B cell (primary cell): ENCODE measurements at regions of chr13 and their contacts with region 1.

Region 1: DNA sequence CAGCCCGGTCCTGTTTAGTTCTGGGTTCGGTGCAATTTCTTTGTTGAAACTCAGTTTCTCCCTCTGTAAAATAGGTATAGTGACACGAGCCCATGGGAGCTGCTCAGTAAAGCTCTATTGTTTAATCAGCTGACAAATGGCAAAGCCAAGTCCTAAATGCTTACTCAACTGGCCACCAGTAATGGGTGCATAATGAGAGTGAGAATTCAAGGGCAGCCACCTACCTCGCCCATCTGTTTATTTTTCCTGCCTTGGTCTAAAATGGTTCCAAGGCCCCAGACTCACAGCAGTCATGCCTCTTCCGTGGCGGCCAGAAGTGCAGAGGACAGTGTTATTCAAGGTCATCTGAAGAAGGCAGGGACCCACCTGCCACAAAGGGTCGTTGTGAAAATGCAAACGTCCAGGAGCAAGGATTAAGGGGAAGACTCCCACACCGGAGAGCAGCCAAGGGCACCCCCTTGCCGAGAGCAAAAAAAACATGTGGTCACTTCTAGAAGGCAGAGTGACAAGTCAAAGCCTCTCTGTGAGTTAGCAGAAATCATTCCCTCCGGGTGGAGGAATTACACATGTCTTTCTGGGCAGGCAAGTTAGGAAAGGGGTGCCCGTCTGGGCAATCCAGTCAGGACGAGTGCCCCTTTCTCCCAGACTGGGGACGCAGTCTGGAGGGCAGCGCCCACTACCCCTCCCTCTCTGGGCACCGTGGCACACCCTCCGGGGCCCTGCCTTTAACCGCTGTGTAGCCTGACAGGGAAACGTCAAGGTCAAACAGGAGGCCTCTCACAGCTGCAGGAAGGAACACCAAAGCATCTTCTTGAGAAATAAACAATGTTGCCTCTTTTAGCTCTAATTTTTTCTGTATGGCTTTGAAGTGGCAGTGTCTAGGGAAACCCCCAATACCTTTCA is 186.2 kb downstream of the FOXO1 start:
- DNase-seq: peak; percentile 29
- ATAC-seq: peak; percentile 40
- H3K4me3 ChIP-seq: no peak overlapping the region
- H3K4me3 Mint-ChIP-seq: peak overlapping the region; percentile 23
- H3K27ac ChIP-seq: no peak overlapping the region
- H3K27ac Mint-ChIP-seq: no peak overlapping the region
- H3K4me1 ChIP-seq: peaks cover 39 to 40% of the 10 kb centered on the region in 2 donors
- H3K4me1 Mint-ChIP-seq: peaks cover 46% of the 10 kb centered on the region
- H3K27me3 ChIP-seq: no peaks in the 10 kb centered on the region
- H3K27me3 Mint-ChIP-seq: no peaks in the 10 kb centered on the region
- CTCF ChIP-seq: no peak

Region 2: GRCh38 chr13:40494513-40494912 is 14.2 kb after region 1 on chr13:
- CTCF ChIA-PET with region 1: no interaction called
- POLR2A ChIA-PET with region 1: no interaction called
- intact Hi-C with region 1: loop called (anchors 2 kb)
- DNase-seq: peak; percentile 62
- ATAC-seq: peak; percentile 37
- H3K4me3 ChIP-seq: peak overlapping the region in 4 of 5 experiments; percentile 4 to 37 (median 25)
- H3K4me3 Mint-ChIP-seq: peak overlapping the region; percentile 78
- H3K27ac ChIP-seq: peak overlapping the region; percentile 35 to 77
- H3K27ac Mint-ChIP-seq: peak overlapping the region; percentile 89
- H3K4me1 ChIP-seq: peaks cover 38 to 59% of the 10 kb centered on the region in 2 donors
- H3K4me1 Mint-ChIP-seq: peaks cover 58% of the 10 kb centered on the region
- H3K27me3 ChIP-seq: no peaks in the 10 kb centered on the region
- H3K27me3 Mint-ChIP-seq: peaks cover under 1% of the 10 kb centered on the region
- CTCF ChIP-seq: no peak

Region 3: DNA sequence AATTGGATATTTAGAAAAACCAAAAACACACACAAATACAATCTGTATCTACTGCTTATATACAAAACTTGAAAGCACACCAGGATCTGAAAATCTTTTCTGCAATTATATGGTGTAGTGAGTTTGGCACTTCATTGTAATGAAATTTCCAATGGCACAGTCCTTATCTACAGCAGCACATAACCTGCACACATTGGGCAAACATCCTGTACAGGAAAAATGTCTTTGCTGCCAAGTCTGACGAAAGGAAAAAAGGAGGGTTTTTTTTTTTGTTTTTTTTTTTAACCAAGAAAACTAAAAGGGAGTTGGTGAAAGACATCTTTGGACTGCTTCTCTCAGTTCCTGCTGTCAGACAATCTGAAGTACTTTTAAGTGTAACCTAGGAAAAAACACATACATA is 78.4 kb after region 1 on chr13:
- CTCF ChIA-PET with region 1: no interaction called
- POLR2A ChIA-PET with region 1: no interaction called
- intact Hi-C with region 1: no loop called
- DNase-seq: no peak
- ATAC-seq: no peak
- H3K4me3 ChIP-seq: no peak overlapping the region
- H3K4me3 Mint-ChIP-seq: no peak overlapping the region
- H3K27ac ChIP-seq: no peak overlapping the region
- H3K27ac Mint-ChIP-seq: peak overlapping the region; percentile 38
- H3K4me1 ChIP-seq: peaks cover 27 to 36% of the 10 kb centered on the region in 2 donors
- H3K4me1 Mint-ChIP-seq: peaks cover 76% of the 10 kb centered on the region
- H3K27me3 ChIP-seq: no peaks in the 10 kb centered on the region
- H3K27me3 Mint-ChIP-seq: no peaks in the 10 kb centered on the region
- CTCF ChIP-seq: no peak